Caco-2 (cell line): ENCODE measurements at regions of chr12 and their contacts with region 1.

Region 1: DNA sequence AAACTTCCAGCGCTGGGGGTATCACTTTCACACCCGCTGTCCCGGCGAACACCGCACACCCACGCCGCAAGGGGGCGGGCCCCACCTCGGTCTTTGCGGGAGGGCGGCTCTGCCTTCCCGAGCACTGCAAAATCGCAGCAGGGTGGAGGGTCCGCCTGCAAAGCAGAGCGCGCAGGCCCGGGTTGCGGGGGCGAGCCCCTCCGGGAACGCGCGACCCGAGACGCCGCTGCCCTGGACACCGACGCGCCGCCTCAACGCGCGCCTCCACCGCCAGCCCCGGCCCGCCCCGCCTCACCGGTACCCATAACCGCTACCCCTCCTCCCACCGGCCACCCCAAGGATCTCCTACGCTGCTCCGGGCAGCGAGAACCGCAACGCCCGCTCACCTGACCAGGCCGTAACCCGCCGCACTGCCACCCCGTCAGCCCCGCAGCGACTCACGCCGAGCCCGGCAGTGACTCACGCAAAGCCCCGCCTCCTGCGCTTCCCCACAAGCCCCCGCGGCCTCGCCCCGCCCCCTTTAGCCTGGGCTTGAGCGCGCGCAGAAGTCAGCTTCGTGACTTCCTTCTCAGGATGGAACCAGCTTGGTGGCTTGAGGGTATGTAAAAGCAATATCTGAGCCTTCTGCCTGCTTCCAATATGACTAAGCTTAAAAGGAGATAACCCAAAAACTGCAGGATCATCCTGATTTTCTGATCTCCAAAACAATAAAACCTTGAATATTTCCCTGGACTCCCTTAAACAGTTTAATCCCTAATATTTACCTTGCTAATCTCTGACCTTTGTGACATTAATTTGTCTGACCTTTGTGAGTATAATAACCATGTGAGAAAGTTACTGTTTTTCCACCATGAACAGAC is at the start of gene RPAP3:
- DNase-seq: peak; percentile 97 to 99
- H3K4me3 ChIP-seq: peak within 1 kb of the TSS; percentile 84
- H3K4me3 Mint-ChIP-seq: peak within 1 kb of the TSS; percentile 64
- H3K27ac Mint-ChIP-seq: peak within 1 kb of the TSS; percentile 94
- H3K4me1 ChIP-seq: peaks cover 7% of the 10 kb centered on the region; the same call in 1 of the 2 replicates
- H3K4me1 Mint-ChIP-seq: peaks cover 17% of the 10 kb centered on the region
- H3K27me3 ChIP-seq: no peaks in the 10 kb centered on the region
- H3K27me3 Mint-ChIP-seq: no peaks in the 10 kb centered on the region
- CTCF ChIP-seq: peak; percentile 65 to 84
- total RNA-seq, gene RPAP3: 58.1 and 67.7 TPM in 2 replicates

Region 2: GRCh38 chr12:47767216-47767724 is 61.5 kb after region 1 on chr12:
- CTCF ChIA-PET with region 1: interaction called, 10 read pairs
- POLR2A ChIA-PET with region 1: interaction called, 7 read pairs
- intact Hi-C with region 1: no loop called
- DNase-seq: peak; percentile 68 to 75
- H3K4me3 ChIP-seq: no peak overlapping the region
- H3K4me3 Mint-ChIP-seq: no peak overlapping the region
- H3K27ac Mint-ChIP-seq: peak overlapping the region; percentile 65
- H3K4me1 ChIP-seq: peaks cover 34% of the 10 kb centered on the region
- H3K4me1 Mint-ChIP-seq: peaks cover 2% of the 10 kb centered on the region
- H3K27me3 ChIP-seq: no peaks in the 10 kb centered on the region
- H3K27me3 Mint-ChIP-seq: no peaks in the 10 kb centered on the region
- CTCF ChIP-seq: peak; percentile 50 to 75